Activated naive CD8-positive, alpha-beta T cell treated with anti-CD3 and anti-CD28 coated beads, Interleukin-2, amount 10 ng/mL, durations not matched to agents 7 days and 5 days (primary cell): ENCODE measurements at regions of chr12 and their contacts with region 1.

Region 1: GRCh38 chr12:121712461-121713256 is at the start of gene TMEM120B:
- DNase-seq: peak; percentile 93
- ATAC-seq: peak; percentile 85
- H3K4me3 Mint-ChIP-seq: peak within 1 kb of the TSS; percentile 89
- H3K27ac Mint-ChIP-seq: peak within 1 kb of the TSS; percentile 97
- H3K4me1 Mint-ChIP-seq: peaks cover 31% of the 10 kb centered on the region
- H3K27me3 Mint-ChIP-seq: peaks cover 2% of the 10 kb centered on the region
- total RNA-seq, gene TMEM120B: 9.8 to 9.9 TPM

Region 2: GRCh38 chr12:121376754-121377697 is 335.6 kb before region 1 on chr12:
- POLR2A ChIA-PET with region 1: no interaction called
- DNase-seq: no peak
- ATAC-seq: no peak
- H3K4me3 Mint-ChIP-seq: no peak overlapping the region
- H3K27ac Mint-ChIP-seq: no peak overlapping the region
- H3K4me1 Mint-ChIP-seq: peaks cover 2% of the 10 kb centered on the region
- H3K27me3 Mint-ChIP-seq: peaks cover 12% of the 10 kb centered on the region

Region 3: GRCh38 chr12:121755591-121755990 is 42.9 kb after region 1 on chr12:
- POLR2A ChIA-PET with region 1: interaction called, 21 read pairs
- DNase-seq: no peak
- ATAC-seq: no peak
- H3K4me3 Mint-ChIP-seq: no peak overlapping the region
- H3K27ac Mint-ChIP-seq: peak overlapping the region; percentile 30
- H3K4me1 Mint-ChIP-seq: peaks cover 18% of the 10 kb centered on the region
- H3K27me3 Mint-ChIP-seq: no peaks in the 10 kb centered on the region

Region 4: GRCh38 chr12:121786441-121786825 is 73.8 kb after region 1 on chr12:
- POLR2A ChIA-PET with region 1: interaction called, 14 read pairs
- DNase-seq: no peak
- ATAC-seq: no peak
- H3K4me3 Mint-ChIP-seq: peak overlapping the region; percentile 89
- H3K27ac Mint-ChIP-seq: peak overlapping the region; percentile 98
- H3K4me1 Mint-ChIP-seq: peaks cover 67% of the 10 kb centered on the region
- H3K27me3 Mint-ChIP-seq: no peaks in the 10 kb centered on the region

Region 5: GRCh38 chr12:121793838-121794533 is 81.3 kb after region 1 on chr12:
- POLR2A ChIA-PET with region 1: interaction called, 17 read pairs
- DNase-seq: peak; percentile 99
- ATAC-seq: peak; percentile 59
- H3K4me3 Mint-ChIP-seq: peak overlapping the region; percentile 72
- H3K27ac Mint-ChIP-seq: peak overlapping the region; percentile 92
- H3K4me1 Mint-ChIP-seq: peaks cover 46% of the 10 kb centered on the region
- H3K27me3 Mint-ChIP-seq: no peaks in the 10 kb centered on the region

Region 6: DNA sequence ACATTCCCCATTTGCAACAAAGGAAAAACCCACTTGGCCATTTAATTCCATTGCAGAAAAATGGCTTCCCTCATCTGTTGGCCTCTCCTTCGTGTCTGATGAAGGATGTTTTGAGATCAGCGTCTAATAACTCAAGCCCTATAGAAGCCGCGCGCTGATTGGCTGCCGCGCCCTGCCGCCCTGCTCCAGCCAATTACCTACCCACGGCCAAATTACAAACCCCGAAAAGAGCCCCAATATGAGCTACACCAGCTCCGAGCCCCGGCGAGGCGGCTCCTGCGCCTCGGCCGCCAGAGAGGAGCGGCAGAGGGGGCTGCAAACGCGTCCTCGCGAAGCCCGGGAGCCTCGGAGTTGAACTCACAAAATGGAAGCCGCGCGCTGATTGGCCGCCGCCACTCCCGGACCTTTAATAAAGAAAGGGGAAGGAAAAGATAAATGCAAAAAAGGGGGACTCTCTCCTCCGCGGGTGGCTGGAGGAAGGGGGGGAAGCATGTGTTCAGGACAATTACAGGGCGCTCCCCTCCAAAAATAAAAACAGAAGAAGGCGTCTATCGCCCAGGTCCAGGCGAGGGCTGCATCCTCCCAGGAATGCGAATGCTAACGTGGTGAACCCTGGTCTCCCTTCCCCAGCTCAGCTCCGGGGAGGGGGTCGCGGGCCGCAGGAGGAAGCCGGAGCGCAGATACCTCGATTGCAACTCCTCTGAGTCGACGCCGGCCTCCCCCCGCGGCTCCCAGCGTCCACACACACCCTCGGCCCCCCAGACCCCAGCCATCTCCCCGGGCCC is 90.4 kb after region 1 on chr12:
- POLR2A ChIA-PET with region 1: interaction called, 13 read pairs
- DNase-seq: peak; percentile 90
- ATAC-seq: peak; percentile 67
- H3K4me3 Mint-ChIP-seq: peak overlapping the region; percentile 89
- H3K27ac Mint-ChIP-seq: peak overlapping the region; percentile 98
- H3K4me1 Mint-ChIP-seq: peaks cover 29% of the 10 kb centered on the region
- H3K27me3 Mint-ChIP-seq: no peaks in the 10 kb centered on the region